Activated CD8-positive, alpha-beta T cell treated with anti-CD3 and anti-CD28 coated beads, Interleukin-2, amount 10 ng/mL, durations not matched to agents 7 days and 5 days (primary cell): ENCODE measurements at regions of chr17 and their contacts with region 1.

Region 1: DNA sequence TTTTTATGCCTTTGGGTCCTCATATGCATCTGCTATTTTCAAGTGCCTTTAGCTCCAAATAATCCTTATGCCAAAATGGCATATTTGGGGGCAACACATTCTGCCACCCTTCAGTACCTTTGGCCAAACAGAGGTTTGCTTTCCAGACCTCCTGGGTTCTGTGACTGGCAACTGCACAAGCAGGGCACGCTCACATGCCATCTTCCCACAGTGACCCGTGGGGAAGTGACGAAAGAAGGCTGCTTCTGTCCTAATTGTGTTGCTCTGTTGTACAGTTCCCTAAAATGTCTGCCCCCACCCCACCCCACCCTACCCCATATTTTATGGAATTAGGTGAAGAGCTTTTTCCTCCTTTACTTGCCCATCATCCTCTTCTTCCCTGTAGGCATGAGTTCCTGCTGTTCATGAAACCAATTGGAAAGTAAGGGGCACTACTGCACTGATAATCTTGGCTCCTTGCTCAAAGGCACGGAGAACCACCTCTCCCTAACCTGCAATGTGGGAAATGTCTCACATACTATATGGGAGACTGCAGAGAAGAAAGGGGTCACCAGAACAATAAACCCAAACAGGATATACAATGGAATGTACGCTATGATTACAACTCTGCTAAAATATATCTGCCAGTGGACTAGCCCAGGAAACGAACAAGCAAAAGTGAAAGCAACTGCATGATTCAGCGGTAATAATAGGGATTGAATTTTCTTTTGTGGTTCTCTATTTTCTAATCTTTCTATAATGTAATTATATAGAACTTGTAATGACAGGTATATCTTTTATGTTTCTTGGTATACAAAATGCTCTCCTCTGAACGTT is 3.3 kb upstream of the SLFN12L start:
- DNase-seq: peak; percentile 66
- ATAC-seq: peak; percentile 29
- H3K4me3 Mint-ChIP-seq: peak overlapping the region; percentile 82
- H3K27ac Mint-ChIP-seq: peak overlapping the region; percentile 95
- H3K4me1 Mint-ChIP-seq: peaks cover 60% of the 10 kb centered on the region
- H3K27me3 Mint-ChIP-seq: no peaks in the 10 kb centered on the region

Region 2: DNA sequence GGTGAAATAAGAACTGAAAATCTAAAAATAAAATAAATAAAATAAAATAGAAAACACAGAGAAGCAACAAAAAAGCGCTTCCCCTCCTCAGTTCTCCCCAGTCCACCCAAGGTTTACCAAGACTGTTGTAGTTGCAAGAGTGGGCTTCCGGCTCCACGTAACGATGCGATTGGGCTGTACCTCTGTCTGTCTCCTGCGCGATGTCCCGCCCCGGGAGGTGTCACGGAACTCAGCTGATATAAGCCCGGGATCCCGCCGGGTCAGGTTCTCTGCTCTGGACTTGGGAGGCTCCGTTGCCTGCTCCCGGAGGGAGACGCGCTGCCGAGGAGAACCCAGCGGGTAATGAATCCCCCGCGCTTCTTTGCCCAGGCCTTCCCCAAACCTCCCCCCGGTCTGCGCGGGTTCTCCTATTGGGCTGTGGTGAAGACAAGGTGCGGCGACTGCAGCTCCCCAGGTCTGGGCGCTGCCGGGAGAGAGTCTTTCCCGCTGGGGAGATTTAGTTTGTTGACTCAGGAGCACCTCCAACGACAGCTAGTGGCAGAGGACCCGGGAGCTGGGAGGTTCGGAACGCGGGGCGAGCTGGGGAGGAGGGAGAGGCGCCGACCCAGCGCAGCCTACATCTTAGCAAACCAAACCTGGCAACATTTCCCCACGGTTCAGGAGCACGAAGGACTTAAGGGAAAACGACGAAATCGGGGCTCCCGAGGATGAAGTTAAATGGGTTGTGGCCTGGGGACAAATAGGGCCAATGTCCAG is 297.8 kb before region 1 on chr17 and contains the start of gene SLFN5:
- CTCF ChIA-PET with region 1: interaction called, 17 read pairs
- POLR2A ChIA-PET with region 1: interaction called, 162 read pairs
- DNase-seq: peak; percentile 97
- ATAC-seq: peak; percentile 80
- H3K4me3 Mint-ChIP-seq: peak within 1 kb of the TSS; percentile 99
- H3K27ac Mint-ChIP-seq: peak within 1 kb of the TSS; percentile 98
- H3K4me1 Mint-ChIP-seq: peaks cover 50% of the 10 kb centered on the region
- H3K27me3 Mint-ChIP-seq: no peaks in the 10 kb centered on the region
- total RNA-seq, gene SLFN5: 209 to 212 TPM

Region 3: DNA sequence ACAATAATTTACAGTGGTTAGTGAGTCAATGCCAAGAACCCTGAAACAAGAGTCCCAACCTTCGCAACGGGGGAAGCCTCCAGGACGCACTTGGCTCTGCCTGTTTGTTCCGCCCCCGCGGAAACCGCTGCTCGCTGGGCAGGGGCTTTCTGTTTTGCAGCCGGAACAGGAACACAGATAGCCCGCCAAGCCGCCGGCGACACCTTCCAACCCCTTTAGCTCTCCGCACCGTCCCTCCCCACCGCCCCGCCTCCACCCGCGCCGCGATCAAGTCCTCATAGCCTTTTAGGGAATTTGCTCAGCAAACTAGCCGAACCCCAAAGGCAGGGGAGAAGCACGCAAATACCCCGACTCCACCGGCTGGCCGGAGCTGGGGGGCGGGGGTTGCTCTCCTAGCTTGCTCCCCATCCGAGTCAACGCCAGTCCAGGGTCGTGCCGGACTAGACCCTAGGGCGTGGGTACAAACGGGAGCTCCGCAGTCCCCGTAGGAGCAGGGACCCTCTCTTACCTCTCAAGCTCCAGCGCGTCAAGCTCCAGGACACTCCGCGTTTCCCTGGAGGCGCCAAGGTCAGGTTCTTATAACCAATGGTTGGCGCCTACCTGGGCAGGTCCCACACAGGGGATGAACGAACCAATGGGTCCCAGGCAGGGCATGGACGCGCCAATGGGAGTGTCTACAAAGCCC is 92.4 kb before region 1 on chr17 and contains the start of gene SLFN13:
- CTCF ChIA-PET with region 1: interaction called, 6 read pairs
- POLR2A ChIA-PET with region 1: interaction called, 10 read pairs
- DNase-seq: peak; percentile 91
- ATAC-seq: peak; percentile 98
- H3K4me3 Mint-ChIP-seq: peak within 1 kb of the TSS; percentile 73
- H3K27ac Mint-ChIP-seq: peak within 1 kb of the TSS; percentile 75
- H3K4me1 Mint-ChIP-seq: peaks cover 26% of the 10 kb centered on the region
- H3K27me3 Mint-ChIP-seq: no peaks in the 10 kb centered on the region
- total RNA-seq, gene SLFN13: 56.2 to 56.3 TPM

Region 4: GRCh38 chr17:35521150-35521549 is 19.6 kb before region 1 on chr17:
- CTCF ChIA-PET with region 1: interaction called, 31 read pairs
- POLR2A ChIA-PET with region 1: interaction called, 20 read pairs
- DNase-seq: no peak
- ATAC-seq: peak; percentile 27
- H3K4me3 Mint-ChIP-seq: peak overlapping the region; percentile 60
- H3K27ac Mint-ChIP-seq: peak overlapping the region; percentile 73
- H3K4me1 Mint-ChIP-seq: peaks cover 93% of the 10 kb centered on the region
- H3K27me3 Mint-ChIP-seq: no peaks in the 10 kb centered on the region

Region 5: DNA sequence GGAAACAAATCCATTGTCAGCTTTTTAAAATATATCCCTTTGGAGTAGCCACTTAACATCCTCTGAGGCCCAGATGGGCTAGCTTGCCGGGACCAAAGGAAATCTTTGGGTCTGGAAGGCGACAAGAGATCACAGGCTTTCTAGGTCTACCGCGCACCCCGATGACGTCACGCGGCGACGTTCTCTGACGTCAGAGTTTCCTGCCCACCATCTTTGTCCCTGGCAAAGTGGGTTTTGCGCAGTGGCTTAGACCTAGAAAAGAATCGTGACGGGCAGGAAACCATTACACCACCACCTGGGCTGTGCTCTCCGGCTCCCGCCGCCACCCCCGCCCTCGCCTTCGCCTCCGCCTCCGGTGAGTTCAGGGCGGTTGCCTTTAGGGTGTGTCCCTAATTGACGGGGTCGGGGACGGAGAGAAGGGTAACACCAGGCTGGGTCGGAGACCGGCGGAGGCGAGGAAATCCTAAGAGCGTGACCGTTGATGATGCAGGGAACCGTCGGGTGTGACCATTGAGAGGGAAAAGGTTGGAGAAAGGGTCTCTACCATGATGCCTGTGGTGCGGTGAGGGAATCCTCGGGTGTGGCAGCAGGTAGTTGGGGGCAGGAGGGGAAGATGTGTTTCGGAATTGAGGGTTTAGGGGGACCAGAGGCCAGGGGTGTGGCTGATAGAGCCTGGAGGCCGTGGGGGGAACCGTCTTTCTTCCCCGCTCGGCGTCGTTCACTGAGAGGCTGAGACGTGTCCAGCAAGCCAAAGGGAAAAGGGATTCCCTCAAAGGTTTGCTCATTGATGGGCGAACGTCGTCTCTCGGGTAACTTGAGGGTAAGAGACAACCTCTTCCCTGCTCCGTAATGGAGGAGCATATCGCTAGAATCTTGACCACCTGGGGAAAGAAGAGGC is 46.5 kb after region 1 on chr17 and contains the start of gene AP2B1:
- CTCF ChIA-PET with region 1: interaction called, 6 read pairs
- POLR2A ChIA-PET with region 1: interaction called, 20 read pairs
- DNase-seq: peak; percentile 97
- ATAC-seq: peak; percentile 99
- H3K4me3 Mint-ChIP-seq: peak within 1 kb of the TSS; percentile 89
- H3K27ac Mint-ChIP-seq: peak within 1 kb of the TSS; percentile 96
- H3K4me1 Mint-ChIP-seq: peaks cover 29% of the 10 kb centered on the region
- H3K27me3 Mint-ChIP-seq: peaks cover 12% of the 10 kb centered on the region
- total RNA-seq, gene AP2B1: 161 to 172 TPM